Activated naive CD4-positive, alpha-beta T cell treated with anti-CD3 and anti-CD28 coated beads for 36 hours (primary cell): ENCODE measurements at regions of chr7 and their contacts with region 1.

Region 1: GRCh38 chr7:39623018-39623731 is at the start of gene RALA:
- DNase-seq: peak; percentile 92
- H3K4me3 Mint-ChIP-seq: peak within 1 kb of the TSS; percentile 97
- H3K27ac Mint-ChIP-seq: peak within 1 kb of the TSS; percentile 95
- H3K4me1 Mint-ChIP-seq: peaks cover 44% of the 10 kb centered on the region
- H3K27me3 Mint-ChIP-seq: no peaks in the 10 kb centered on the region
- total RNA-seq, gene RALA: 30.3 to 35.6 TPM

Region 2: DNA sequence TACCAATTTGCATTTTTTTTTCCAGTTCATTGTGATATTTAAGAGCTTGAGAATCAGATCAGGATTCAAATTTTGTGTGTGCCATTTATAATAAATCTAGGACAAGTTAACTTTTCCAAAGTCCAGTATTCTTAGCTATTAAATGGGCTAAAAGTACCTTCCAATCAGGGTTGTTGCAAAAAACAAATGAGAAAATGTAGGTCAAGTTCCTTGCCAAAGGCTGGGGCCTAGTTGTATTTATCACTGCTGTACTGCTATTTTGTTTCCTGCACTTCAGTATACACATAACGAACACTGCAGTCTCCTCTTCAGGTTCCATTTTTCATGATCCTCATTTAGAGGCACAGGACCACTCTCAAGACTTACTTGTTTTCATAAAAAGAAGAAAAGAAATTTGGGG is 706.8 kb before region 1 on chr7:
- CTCF ChIA-PET with region 1: no interaction called
- intact Hi-C with region 1: no loop called
- DNase-seq: no peak
- H3K4me3 Mint-ChIP-seq: no peak overlapping the region
- H3K27ac Mint-ChIP-seq: no peak overlapping the region
- H3K4me1 Mint-ChIP-seq: no peaks in the 10 kb centered on the region
- H3K27me3 Mint-ChIP-seq: no peaks in the 10 kb centered on the region

Region 3: DNA sequence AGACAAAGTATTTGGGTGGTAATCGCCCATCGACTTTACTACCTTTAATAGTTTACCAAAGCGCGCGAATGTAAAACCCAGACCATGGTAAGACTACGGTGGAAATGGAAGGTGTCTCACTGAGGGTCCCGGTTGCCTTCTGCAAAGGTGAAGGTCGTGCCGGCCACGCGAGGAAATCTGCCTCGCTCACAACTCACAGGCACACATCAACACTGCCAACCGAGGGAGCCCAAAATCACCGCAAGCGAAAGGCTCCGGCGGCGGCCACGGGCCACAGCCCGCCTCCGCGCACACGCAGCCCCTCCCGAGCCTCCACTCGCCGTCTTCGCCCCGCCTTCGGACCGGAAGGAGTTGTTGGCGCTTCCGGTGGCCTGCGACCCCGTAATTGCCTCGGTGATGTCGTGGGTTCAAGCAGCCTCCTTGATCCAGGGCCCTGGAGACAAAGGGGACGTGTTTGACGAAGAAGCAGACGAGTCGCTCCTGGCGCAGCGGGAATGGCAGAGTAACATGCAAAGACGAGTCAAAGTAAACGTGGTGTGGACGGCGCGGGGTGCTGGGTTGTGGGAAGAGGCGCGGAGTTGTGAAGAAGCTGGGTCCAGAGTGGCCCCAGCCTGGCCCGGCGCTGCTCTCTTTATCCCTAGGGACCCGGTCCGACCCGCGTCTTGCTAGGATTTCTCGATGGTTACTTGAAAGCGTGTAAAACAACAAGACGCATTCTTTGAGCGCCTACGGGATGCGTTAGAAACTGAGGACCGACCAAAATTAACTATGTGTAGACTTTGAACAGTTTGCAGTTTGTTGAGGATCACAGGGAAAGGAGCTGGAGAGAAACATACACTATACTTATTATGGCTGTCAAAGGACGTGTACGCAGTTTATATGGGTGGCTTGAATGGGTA is 56.9 kb before region 1 on chr7 and contains the start of gene YAE1:
- CTCF ChIA-PET with region 1: no interaction called
- intact Hi-C with region 1: loop called (anchors 1 kb)
- DNase-seq: peak; percentile 86
- H3K4me3 Mint-ChIP-seq: peak within 1 kb of the TSS; percentile 97
- H3K27ac Mint-ChIP-seq: peak within 1 kb of the TSS; percentile 95
- H3K4me1 Mint-ChIP-seq: peaks cover 18% of the 10 kb centered on the region
- H3K27me3 Mint-ChIP-seq: no peaks in the 10 kb centered on the region
- total RNA-seq, gene YAE1: 4.6 to 5.5 TPM

Region 4: GRCh38 chr7:39589323-39590111 is 33.7 kb before region 1 on chr7:
- CTCF ChIA-PET with region 1: interaction called, 3 read pairs
- intact Hi-C with region 1: loop called (anchors 1 kb)
- DNase-seq: peak; percentile 92
- H3K4me3 Mint-ChIP-seq: no peak overlapping the region
- H3K27ac Mint-ChIP-seq: peak overlapping the region; percentile 52
- H3K4me1 Mint-ChIP-seq: peaks cover 39% of the 10 kb centered on the region
- H3K27me3 Mint-ChIP-seq: no peaks in the 10 kb centered on the region

Region 5: DNA sequence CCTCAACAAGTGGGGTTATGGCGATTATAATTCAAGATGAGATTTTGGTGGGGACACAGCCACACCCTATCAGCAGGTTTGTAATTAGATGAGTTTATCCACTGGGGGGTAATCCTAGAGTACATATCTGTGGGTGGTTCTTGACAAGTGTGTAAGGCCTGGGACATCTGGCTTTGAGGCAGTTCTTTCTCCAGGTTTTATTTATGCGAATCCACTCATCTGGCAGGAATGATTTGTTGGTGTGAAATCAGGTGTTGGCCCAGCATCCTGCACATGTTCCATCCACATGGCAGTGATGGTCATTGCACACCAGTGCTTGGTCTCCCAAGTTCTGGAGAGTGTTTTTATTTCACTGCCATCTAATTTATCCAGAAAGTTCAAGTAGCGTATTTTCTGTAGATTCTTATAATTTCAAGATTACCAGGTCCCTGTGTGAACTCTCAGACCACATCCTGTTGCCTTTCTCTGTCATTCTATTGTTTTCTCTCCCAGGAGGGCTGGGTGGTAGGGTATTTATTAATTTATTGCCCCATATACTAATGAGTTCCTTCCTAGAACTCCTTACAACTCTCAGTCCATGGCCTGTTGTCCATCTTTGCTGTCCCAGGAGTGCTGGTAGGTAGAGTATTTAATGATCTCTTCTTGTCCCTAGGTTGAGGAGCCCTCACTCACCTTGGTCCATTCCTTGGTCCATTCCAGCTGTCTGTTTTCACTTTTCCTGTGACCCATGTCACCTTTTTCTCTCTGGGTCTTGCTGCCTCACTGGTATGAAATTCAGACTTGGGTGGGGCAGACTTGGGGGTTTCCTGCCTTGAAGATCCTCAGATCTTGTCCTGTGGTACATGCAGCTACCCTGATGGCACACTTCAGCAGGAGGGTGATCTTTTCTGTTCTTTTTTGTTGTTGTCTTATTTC is 10.6 kb after region 1 on chr7:
- CTCF ChIA-PET with region 1: interaction called, 3 read pairs
- intact Hi-C with region 1: loop called (anchors 1 kb)
- DNase-seq: peak; percentile 26
- H3K4me3 Mint-ChIP-seq: no peak overlapping the region
- H3K27ac Mint-ChIP-seq: peak overlapping the region; percentile 75
- H3K4me1 Mint-ChIP-seq: peaks cover 81% of the 10 kb centered on the region
- H3K27me3 Mint-ChIP-seq: no peaks in the 10 kb centered on the region

Region 6: DNA sequence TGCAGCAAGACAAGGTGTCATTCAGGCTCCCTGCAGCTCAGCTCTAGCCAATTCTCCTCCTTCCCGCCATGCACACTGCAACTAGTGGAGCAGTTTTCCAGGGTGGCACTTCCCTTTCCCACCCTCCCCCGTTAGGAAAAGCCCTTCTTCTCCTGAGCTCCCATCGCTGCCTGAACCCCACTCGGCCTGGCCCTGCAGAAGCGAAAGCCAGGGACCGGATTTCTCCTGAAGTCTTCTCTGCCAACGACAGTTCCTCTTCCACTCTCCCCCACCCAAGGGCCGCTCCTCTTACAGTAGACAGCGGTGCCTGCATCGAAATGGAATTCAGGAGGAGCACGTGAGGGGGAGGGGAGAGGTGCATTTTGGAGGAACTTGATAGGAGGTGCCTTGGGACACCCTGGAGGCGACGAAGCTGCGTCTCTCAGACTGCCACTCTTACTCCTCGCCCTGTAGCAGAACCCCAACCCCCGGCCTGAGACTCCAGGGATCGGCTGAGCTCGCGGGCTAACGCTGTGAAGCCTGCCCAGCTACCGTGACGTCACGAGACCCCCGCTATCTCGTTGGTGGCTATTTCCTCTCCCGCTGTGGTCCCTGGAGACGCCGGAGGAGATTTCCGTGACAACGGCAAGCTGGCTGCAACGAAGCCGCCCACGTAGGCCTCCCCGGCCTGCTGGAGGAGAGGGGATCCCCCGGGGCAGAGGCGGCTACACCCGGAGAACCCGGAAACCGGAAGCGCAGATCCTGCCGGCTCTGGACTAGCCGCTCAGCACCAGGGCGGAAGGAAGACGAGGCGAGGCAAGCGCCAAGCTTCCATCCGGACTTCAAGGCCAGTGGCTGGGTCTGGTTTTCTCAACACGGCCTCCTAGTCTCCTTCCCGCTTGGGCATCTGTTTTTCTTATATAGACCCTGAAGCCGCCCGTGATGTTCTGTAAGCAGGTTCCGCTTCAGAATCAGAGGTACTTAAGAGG is 109.9 kb after region 1 on chr7:
- CTCF ChIA-PET with region 1: no interaction called
- intact Hi-C with region 1: loop called (anchors 1 kb)
- DNase-seq: peak; percentile 98
- H3K4me3 Mint-ChIP-seq: peak overlapping the region; percentile 74
- H3K27ac Mint-ChIP-seq: peak overlapping the region; percentile 61
- H3K4me1 Mint-ChIP-seq: peaks cover 32% of the 10 kb centered on the region
- H3K27me3 Mint-ChIP-seq: peaks cover 3% of the 10 kb centered on the region

Region 7: GRCh38 chr7:40134428-40135316 is 511.5 kb after region 1 on chr7 and contains the starts of genes MPLKIP and SUGCT:
- CTCF ChIA-PET with region 1: interaction called, 5 read pairs
- intact Hi-C with region 1: loop called (anchors 1 kb)
- DNase-seq: peak; percentile 87
- H3K4me3 Mint-ChIP-seq: peak within 1 kb of the TSS; percentile 93
- H3K27ac Mint-ChIP-seq: peak within 1 kb of the TSS; percentile 96
- H3K4me1 Mint-ChIP-seq: peaks cover 26% of the 10 kb centered on the region
- H3K27me3 Mint-ChIP-seq: no peaks in the 10 kb centered on the region
- total RNA-seq, gene MPLKIP: 38.1 to 38.8 TPM
- total RNA-seq, gene SUGCT: 0.81 to 1.2 TPM